CD8-positive, alpha-beta T cell (primary cell): ENCODE measurements at regions of chr5 and their contacts with region 1.

Region 1: GRCh38 chr5:157253547-157253946 is 12.4 kb upstream of the CYFIP2 start:
- DNase-seq: peak in 1 of 9 experiments; percentile 29
- ATAC-seq: no peak
- H3K4me3 ChIP-seq: no peak overlapping the region
- H3K4me3 Mint-ChIP-seq: peak overlapping the region; percentile 61
- H3K27ac ChIP-seq: peak overlapping the region; percentile 61 to 72
- H3K27ac Mint-ChIP-seq: peak overlapping the region; percentile 92
- H3K4me1 ChIP-seq: peaks cover 97% of the 10 kb centered on the region
- H3K4me1 Mint-ChIP-seq: peaks cover 93% of the 10 kb centered on the region
- H3K27me3 ChIP-seq: no peaks in the 10 kb centered on the region
- H3K27me3 Mint-ChIP-seq: no peaks in the 10 kb centered on the region
- CTCF ChIP-seq: peak; percentile 54

Region 2: DNA sequence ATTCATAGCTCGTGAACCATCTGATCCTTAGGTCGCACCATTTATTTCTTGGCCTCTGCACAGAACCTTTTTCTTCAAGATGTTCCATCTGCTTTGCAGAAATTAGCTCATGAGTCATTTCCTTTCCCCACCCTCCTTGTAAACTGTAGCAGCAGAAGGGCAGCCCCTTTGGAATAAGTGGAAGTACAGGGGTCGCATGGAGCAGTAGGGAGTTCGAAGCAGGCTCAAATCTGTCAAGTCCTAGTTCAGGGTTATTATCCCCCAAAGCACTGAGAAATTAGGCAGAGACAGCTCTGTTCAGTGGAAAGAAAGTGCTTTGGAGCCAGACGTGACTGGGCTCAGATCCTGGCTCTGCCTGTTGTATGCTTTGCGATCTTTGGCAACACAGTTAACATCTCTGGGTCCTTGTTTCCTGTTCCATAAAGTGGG is 842.3 kb before region 1 on chr5:
- CTCF ChIA-PET with region 1: no interaction called
- POLR2A ChIA-PET with region 1: no interaction called
- intact Hi-C with region 1: no loop called
- DNase-seq: no peak
- ATAC-seq: no peak
- H3K4me3 ChIP-seq: no peak overlapping the region
- H3K4me3 Mint-ChIP-seq: no peak overlapping the region
- H3K27ac ChIP-seq: no peak overlapping the region
- H3K27ac Mint-ChIP-seq: no peak overlapping the region
- H3K4me1 ChIP-seq: no peaks in the 10 kb centered on the region
- H3K4me1 Mint-ChIP-seq: no peaks in the 10 kb centered on the region
- H3K27me3 ChIP-seq: no peaks in the 10 kb centered on the region
- H3K27me3 Mint-ChIP-seq: peaks cover 13% of the 10 kb centered on the region
- CTCF ChIP-seq: no peak

Region 3: DNA sequence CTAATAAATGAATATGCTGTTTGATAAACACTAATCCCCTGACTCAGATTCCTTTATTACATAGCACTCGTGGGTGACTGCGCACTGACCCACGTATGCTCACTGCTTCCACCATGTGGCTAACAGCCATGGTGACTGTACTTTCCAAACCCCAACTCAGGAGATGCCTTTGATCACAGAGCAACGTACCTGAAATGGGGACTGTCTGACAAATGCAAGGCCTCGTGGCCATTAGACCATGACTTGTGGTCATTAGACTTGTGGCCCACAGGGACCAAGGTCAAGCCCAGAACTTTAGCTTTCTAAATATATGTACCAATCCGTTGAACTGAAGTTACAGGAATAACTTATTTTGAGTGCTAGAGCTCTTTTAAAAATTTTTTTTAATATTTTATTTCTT is 58.9 kb after region 1 on chr5:
- CTCF ChIA-PET with region 1: interaction called, 21 read pairs
- POLR2A ChIA-PET with region 1: interaction called, 8 read pairs
- intact Hi-C with region 1: loop called (anchors 1 kb)
- DNase-seq: peak; percentile 24 to 87 (median 66)
- ATAC-seq: peak; percentile 95
- H3K4me3 ChIP-seq: no peak overlapping the region
- H3K4me3 Mint-ChIP-seq: no peak overlapping the region
- H3K27ac ChIP-seq: peak overlapping the region in 1 of 2 experiments; percentile 11
- H3K27ac Mint-ChIP-seq: peak overlapping the region; percentile 81
- H3K4me1 ChIP-seq: peaks cover 37% of the 10 kb centered on the region
- H3K4me1 Mint-ChIP-seq: peaks cover 38% of the 10 kb centered on the region
- H3K27me3 ChIP-seq: no peaks in the 10 kb centered on the region
- H3K27me3 Mint-ChIP-seq: no peaks in the 10 kb centered on the region
- CTCF ChIP-seq: peak; percentile 62